Mammary epithelial cell (primary cell): ENCODE measurements at regions of chr2 and their contacts with region 1.

Region 1: GRCh38 chr2:175187378-175187777 is 5.9 kb upstream of the ATP5MC3 start:
- DNase-seq: peak; percentile 31
- H3K4me3 ChIP-seq: no peak overlapping the region
- H3K27ac ChIP-seq: no peak overlapping the region
- H3K4me1 ChIP-seq: no peaks in the 10 kb centered on the region
- H3K27me3 ChIP-seq: no peaks in the 10 kb centered on the region
- CTCF ChIP-seq: peak in 1 of 2 donors; percentile 57

Region 2: GRCh38 chr2:175030380-175031271 is 156.8 kb before region 1 on chr2:
- CTCF ChIA-PET with region 1: interaction called, 3 read pairs
- dilution Hi-C with region 1: no loop called
- in situ Hi-C with region 1: no loop called
- intact Hi-C with region 1: loop called (anchors 1 kb)
- DNase-seq: peak; percentile 31
- H3K4me3 ChIP-seq: no peak overlapping the region
- H3K27ac ChIP-seq: no peak overlapping the region
- H3K4me1 ChIP-seq: no peaks in the 10 kb centered on the region
- H3K27me3 ChIP-seq: no peaks in the 10 kb centered on the region
- CTCF ChIP-seq: peak; percentile 29 to 54

Region 3: GRCh38 chr2:175036582-175037018 is 150.8 kb before region 1 on chr2:
- CTCF ChIA-PET with region 1: no interaction called
- dilution Hi-C with region 1: no loop called
- in situ Hi-C with region 1: no loop called
- intact Hi-C with region 1: loop called (anchors 1 kb)
- DNase-seq: no peak
- H3K4me3 ChIP-seq: no peak overlapping the region
- H3K27ac ChIP-seq: no peak overlapping the region
- H3K4me1 ChIP-seq: no peaks in the 10 kb centered on the region
- H3K27me3 ChIP-seq: no peaks in the 10 kb centered on the region
- CTCF ChIP-seq: peak; percentile 14 to 49

Region 4: DNA sequence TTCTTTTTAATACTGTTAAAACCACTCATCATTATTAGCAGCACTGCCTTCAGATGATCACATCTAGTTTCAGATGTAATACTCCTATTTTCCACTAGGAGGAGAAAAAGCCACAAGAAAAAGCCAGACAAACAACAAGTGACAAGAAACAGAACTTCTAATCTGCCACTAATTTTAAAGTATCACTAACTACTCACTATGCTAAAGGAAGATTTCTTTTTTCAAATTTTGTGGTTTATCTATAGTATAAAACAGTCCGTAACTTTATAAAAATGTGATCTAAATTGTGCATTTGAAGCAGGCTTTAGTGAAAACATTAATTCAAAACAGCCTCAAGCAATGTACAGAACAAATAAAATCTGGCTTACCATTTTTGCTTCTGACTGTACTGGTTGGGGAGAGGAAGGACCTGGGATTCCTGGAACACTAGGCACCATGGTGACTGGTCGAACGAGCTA is 76.1 kb before region 1 on chr2:
- CTCF ChIA-PET with region 1: no interaction called
- dilution Hi-C with region 1: no loop called
- in situ Hi-C with region 1: no loop called
- intact Hi-C with region 1: loop called (anchors 1 kb)
- DNase-seq: peak; percentile 34
- H3K4me3 ChIP-seq: no peak overlapping the region
- H3K27ac ChIP-seq: no peak overlapping the region
- H3K4me1 ChIP-seq: no peaks in the 10 kb centered on the region
- H3K27me3 ChIP-seq: no peaks in the 10 kb centered on the region
- CTCF ChIP-seq: peak; percentile 58 to 65

Region 5: DNA sequence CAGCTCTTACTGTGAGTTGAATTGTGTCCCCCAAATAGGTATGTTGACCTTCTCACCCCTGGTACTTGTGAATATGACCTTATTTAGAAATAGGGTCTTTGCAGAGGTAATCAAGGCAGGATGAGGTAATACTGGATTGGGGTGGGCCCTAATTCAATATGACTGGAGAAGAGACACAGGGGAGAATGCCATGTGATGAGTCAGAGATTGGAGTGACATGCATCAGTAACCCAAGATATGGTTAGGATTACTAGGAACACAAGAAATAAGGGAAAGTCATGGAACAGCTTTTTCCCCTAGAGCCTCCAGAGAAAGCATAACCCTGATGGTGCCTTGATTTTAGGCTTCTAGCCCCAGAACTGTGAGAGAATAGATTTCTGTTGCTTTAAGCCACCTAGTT is 31.2 kb after region 1 on chr2:
- CTCF ChIA-PET with region 1: no interaction called
- dilution Hi-C with region 1: no loop called
- in situ Hi-C with region 1: no loop called
- intact Hi-C with region 1: no loop called
- DNase-seq: no peak
- H3K4me3 ChIP-seq: no peak overlapping the region
- H3K27ac ChIP-seq: no peak overlapping the region
- H3K4me1 ChIP-seq: no peaks in the 10 kb centered on the region
- H3K27me3 ChIP-seq: peaks cover 5% of the 10 kb centered on the region
- CTCF ChIP-seq: no peak